Tibial artery (tissue), 4 donors: ENCODE measurements at regions of chr20 and their contacts with region 1.

Region 1: DNA sequence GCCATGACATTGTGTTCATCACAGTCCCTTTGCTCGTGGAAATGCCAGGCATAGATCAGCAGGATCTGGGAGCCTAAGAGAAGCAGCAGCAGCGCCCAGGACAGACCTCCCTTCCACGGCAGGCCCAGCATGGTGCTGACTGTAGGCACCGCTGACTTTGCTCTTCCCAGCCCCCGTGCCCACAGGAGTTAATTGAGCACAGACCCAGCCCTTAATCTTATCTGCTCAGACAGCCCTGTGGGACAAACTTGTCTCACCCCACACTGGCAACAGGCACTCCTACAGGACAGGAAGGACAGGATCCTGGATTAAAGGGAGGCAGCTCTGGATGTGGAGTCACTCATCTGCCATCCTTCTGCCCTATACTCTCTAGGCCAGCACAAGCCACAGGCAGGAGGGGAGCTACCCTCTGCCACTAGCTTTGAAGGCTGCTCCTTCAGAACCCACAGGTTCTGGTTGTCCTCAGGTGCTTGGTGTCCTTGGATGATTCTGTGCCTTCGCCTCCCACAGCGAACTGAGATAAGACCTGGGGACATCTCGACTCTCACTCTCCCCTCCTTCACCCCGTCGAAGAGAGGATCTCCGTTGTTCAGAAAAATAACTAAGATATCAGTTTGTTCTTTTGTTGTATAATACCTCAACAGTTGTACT is at the start of gene CST9L:
- DNase-seq: no peak
- H3K4me3 ChIP-seq: no peak within 1 kb of the TSS
- H3K27ac ChIP-seq: no peak within 1 kb of the TSS
- H3K4me1 ChIP-seq: no peaks in the 10 kb centered on the region
- H3K27me3 ChIP-seq: no peaks in the 10 kb centered on the region
- CTCF ChIP-seq: no peak

Region 2: GRCh38 chr20:22836877-22837276 is 731.6 kb before region 1 on chr20:
- intact Hi-C with region 1: no loop called
- DNase-seq: no peak
- H3K4me3 ChIP-seq: no peak overlapping the region
- H3K27ac ChIP-seq: no peak overlapping the region
- H3K4me1 ChIP-seq: peaks cover 0 to 14% (median 0%) of the 10 kb centered on the region in 4 donors
- H3K27me3 ChIP-seq: no peaks in the 10 kb centered on the region
- CTCF ChIP-seq: no peak

Region 3: DNA sequence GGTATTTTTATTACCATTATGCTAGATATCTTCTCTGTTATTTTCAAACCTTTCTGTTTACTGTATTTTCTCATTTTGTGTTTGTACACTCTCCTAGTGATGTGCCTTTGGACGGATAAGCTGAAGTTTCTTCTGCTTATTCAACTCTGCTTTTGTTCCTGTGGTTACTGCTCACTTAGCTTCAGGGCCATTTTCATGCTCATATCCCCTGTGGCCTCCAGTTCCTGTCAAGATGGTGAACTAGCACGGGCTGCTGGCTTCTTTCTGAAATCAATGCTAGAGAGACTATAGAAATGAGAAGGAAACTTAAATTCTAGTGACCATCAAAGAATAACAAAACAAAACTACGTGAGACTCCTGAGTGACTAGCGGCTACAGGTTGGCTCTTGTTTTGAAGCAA is 84.4 kb before region 1 on chr20:
- intact Hi-C with region 1: loop called (anchors 10 kb)
- DNase-seq: no peak
- H3K4me3 ChIP-seq: no peak overlapping the region
- H3K27ac ChIP-seq: no peak overlapping the region
- H3K4me1 ChIP-seq: no peaks in the 10 kb centered on the region
- H3K27me3 ChIP-seq: no peaks in the 10 kb centered on the region
- CTCF ChIP-seq: no peak